ENCODE measurements at regions of chr14 and their contacts with region 1.

Region 1: GRCh38 chr14:58107947-58108552 is 44.0 kb downstream of the ARMH4 start:
- DNase-seq: peak in 39 of 42 donors; percentile 8 to 81 (median 52)

Region 2: GRCh38 chr14:58166005-58166983 is 58.2 kb after region 1 on chr14:
- intact Hi-C with region 1: loop called (anchors 5 kb)
- DNase-seq: peak; percentile 68 to 96 (median 90)